Psoas muscle (tissue), 8 donors: ENCODE measurements at regions of chr2 and their contacts with region 1.

Region 1: DNA sequence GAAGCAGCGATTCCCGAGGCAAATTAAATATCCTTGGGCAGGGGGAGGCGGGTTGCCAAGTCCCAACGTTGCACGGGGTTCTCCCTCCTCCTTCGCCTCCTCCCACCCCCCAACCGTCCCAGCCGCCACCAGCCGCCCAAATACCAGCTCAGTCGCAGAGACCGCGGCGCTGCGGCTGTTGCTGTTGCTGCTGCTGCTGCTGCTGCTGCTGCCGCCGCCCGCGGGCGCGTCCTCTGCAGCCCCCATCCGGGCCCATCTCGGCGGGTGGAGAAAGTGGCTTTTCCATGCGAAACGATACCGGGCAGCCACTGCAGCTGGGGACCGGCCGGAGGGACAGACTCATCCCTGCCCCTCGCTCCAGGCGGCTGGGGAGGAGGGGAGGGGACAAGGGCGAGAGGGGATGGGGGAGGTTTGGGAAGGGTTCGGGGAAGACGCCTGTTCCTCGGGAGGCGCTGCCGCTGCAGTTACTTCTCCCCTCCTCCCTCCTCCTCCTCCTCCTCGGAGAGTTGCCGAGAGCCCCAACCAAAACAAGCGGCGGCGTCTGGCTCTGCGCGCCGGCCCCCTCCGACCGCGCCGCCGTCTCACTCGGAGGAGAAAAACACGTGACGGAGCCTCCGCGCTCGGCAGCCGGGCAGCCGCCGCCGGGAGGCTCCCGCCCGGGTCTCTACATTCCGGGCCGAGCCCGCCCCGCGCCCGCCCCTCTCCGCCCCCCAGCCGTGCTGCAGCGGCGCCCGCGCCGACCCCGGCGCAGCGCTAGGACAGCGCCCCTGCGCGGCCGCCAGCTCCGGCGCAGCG is at the start of gene IRS1:
- DNase-seq: peak; percentile 77 to 87
- ATAC-seq: peak; percentile 25 to 48 (median 38)
- H3K4me3 ChIP-seq: peak within 1 kb of the TSS; percentile 89
- H3K27ac ChIP-seq: peak within 1 kb of the TSS; percentile 99
- H3K4me1 ChIP-seq: peaks cover 44% of the 10 kb centered on the region
- H3K27me3 ChIP-seq: no peaks in the 10 kb centered on the region
- CTCF ChIP-seq: peak; percentile 44
- total RNA-seq, gene IRS1: 6.1 to 12.2 (median 11.6) TPM

Region 2: GRCh38 chr2:225668606-225669266 is 1130.6 kb before region 1 on chr2:
- intact Hi-C with region 1: loop called (anchors 2 to 5 kb)
- DNase-seq: no peak
- ATAC-seq: peak in 2 of 4 donors; percentile 65 to 68
- H3K4me3 ChIP-seq: no peak overlapping the region
- H3K27ac ChIP-seq: no peak overlapping the region
- H3K4me1 ChIP-seq: no peaks in the 10 kb centered on the region
- H3K27me3 ChIP-seq: no peaks in the 10 kb centered on the region
- CTCF ChIP-seq: peak; percentile 65

Region 3: GRCh38 chr2:226130192-226130591 is 669.2 kb before region 1 on chr2:
- intact Hi-C with region 1: loop called in 1 of 2 experiments (anchors 2 kb)
- DNase-seq: no peak
- ATAC-seq: peak in 1 of 4 donors; percentile 49
- H3K4me3 ChIP-seq: no peak overlapping the region
- H3K27ac ChIP-seq: peak overlapping the region; percentile 78
- H3K4me1 ChIP-seq: peaks cover 36% of the 10 kb centered on the region
- H3K27me3 ChIP-seq: no peaks in the 10 kb centered on the region
- CTCF ChIP-seq: no peak

Region 4: GRCh38 chr2:226274143-226274542 is 525.2 kb before region 1 on chr2:
- intact Hi-C with region 1: loop called in 1 of 2 experiments (anchors 5 kb)
- DNase-seq: no peak
- ATAC-seq: peak in 2 of 4 donors; percentile 45
- H3K4me3 ChIP-seq: no peak overlapping the region
- H3K27ac ChIP-seq: no peak overlapping the region
- H3K4me1 ChIP-seq: peaks cover 4% of the 10 kb centered on the region
- H3K27me3 ChIP-seq: no peaks in the 10 kb centered on the region
- CTCF ChIP-seq: no peak

Region 5: DNA sequence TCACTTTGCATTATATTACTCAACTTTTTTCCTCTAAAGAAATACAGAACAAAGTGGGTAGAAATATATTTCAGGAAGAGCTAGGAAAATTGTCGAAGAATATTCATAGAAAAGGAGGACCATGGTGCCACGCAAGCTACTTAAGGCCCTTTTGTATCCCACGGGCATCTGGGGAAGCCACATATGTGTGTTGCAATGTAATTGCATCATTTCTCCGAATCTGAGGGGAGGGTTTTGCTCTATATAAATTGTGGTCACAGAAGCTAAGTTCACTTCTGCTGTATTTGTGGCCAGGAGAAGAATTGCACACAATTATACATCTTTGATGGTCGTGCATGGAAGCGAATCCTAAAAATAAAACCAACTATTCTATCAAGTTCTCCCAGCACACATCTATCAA is 360.0 kb before region 1 on chr2:
- intact Hi-C with region 1: loop called (anchors 5 to 10 kb)
- DNase-seq: no peak
- ATAC-seq: no peak
- H3K4me3 ChIP-seq: no peak overlapping the region
- H3K27ac ChIP-seq: no peak overlapping the region
- H3K4me1 ChIP-seq: peaks cover 8% of the 10 kb centered on the region
- H3K27me3 ChIP-seq: no peaks in the 10 kb centered on the region
- CTCF ChIP-seq: no peak

Region 6: DNA sequence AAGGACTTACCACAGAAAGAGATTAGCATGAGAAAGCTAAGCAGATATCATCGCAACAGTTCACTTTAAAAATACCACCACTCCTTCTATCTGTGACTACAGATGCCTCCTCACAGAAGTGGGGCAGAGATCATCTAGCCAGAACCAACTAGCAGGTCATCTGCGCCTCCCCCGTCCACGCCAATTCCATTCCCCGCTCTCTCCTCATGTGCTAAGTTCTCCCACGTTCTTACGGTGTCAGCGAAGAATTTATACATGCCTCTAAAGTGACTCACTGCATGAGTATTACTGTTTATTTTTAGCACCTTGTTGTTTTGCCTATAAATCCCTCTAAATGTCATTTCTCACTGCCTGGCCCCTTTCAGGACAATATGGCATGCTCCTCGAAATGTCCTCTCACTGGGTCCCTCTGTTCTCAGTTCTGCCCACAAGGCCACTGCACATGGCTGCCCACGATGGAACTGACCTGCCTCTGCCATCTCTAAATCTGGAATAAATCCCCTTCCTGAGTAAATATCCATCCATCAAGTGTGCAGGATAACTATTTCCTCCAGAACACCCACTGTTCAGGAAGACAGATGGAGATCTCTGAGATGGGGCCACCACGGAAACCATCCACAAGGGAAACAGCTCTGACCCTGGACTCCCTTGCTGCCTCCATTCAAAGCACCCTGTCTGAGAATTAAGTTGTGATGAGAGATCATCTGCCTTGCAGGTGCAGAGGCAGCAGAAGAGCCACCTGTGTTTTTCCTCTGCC is 137.4 kb before region 1 on chr2:
- intact Hi-C with region 1: loop called (anchors 2 to 10 kb)
- DNase-seq: peak; percentile 52 to 80
- ATAC-seq: peak; percentile 84 to 92 (median 89)
- H3K4me3 ChIP-seq: peak overlapping the region; percentile 30
- H3K27ac ChIP-seq: peak overlapping the region; percentile 89
- H3K4me1 ChIP-seq: peaks cover 22% of the 10 kb centered on the region
- H3K27me3 ChIP-seq: no peaks in the 10 kb centered on the region
- CTCF ChIP-seq: no peak

Region 7: DNA sequence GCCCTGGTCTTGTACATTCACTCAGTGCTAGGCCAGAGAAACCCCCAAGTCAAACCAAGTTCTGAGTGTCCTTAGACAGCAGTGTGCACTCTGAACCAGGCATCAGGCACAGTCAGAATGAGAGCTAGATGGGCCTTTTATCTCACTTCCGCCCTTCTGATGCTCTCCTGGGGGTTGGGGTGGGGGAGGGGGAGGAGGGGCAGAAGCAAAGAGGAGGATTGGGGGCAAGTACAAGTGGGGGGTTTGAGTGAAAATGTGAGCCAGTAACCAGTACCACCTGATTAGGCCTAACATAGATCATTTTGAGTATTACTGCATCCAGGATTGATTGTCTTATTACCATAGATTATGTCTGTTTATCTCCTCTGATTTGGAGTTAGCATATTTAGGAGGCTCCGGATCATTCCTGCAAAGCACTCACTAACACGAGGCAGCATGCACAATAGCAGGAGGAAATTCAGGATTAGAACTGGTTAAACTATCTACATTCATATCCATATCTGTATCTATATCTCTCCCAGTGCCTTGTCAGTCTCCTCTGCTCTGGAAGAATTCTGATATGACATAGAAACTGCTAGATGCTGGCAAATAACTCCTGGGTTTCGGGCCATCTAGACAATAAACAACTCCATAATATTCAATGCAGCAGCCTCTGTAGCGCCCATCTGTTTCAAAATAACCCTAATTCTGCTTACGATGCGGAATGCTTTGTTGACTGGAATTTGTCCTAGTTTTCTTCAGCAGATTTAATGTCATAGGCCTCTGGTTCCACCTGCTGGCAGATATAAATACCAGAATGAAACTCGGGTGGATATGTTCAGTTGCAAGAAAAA is 185.6 kb after region 1 on chr2:
- intact Hi-C with region 1: no loop called
- DNase-seq: no peak
- ATAC-seq: peak; percentile 75 to 95 (median 85)
- H3K4me3 ChIP-seq: no peak overlapping the region
- H3K27ac ChIP-seq: peak overlapping the region; percentile 27
- H3K4me1 ChIP-seq: peaks cover 10% of the 10 kb centered on the region
- H3K27me3 ChIP-seq: no peaks in the 10 kb centered on the region
- CTCF ChIP-seq: peak; percentile 75

Region 8: GRCh38 chr2:227025510-227025909 is 226.1 kb after region 1 on chr2:
- intact Hi-C with region 1: no loop called
- DNase-seq: no peak
- ATAC-seq: no peak
- H3K4me3 ChIP-seq: no peak overlapping the region
- H3K27ac ChIP-seq: no peak overlapping the region
- H3K4me1 ChIP-seq: no peaks in the 10 kb centered on the region
- H3K27me3 ChIP-seq: no peaks in the 10 kb centered on the region
- CTCF ChIP-seq: no peak